ENCODE measurements at regions of chr14 and their contacts with region 1.

Region 1: DNA sequence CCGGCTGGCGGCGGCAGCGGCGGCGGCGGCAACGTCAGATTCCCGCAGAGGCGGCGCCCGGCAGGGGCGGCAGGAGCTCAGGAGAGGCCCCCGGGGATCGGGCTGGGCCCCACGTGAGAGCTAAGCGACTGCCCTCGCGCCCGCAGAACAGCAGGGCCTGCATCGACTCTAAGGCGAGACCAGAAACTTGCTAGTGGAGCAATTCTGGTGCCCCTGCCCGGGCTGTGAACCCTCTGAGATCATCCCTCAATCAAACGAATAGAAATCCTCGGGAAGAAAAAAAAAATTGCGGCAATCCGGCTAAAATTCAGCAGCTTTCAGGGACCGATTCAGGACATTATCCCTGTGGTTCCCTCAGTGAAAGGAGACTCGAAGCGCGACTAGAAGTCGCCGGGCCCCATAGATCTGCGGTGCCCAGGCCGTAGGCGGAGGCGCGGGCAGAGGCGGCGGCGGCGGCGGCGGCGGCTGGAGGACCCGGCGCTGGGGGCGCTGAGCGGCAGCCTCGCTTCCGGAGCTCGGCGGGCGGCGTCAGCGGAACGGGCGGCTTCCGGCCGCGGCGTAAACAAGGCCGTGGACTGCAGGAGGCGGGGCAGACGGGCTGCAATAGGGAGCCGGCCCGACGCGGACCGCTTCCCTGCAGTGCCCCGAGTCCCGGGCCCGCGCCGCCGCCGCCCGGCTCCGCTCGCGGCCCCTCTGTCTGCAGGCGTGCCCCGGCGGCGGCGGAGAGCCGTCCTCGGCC is at the start of gene KLHDC2:
- DNase-seq: peak; percentile 98
- H3K4me3 Mint-ChIP-seq: peak within 1 kb of the TSS; percentile 97
- H3K27ac Mint-ChIP-seq: peak within 1 kb of the TSS; percentile 100
- H3K4me1 Mint-ChIP-seq: peaks cover 31% of the 10 kb centered on the region
- H3K27me3 Mint-ChIP-seq: no peaks in the 10 kb centered on the region
- total RNA-seq, gene KLHDC2: 24.6 and 28.0 TPM in 2 replicates

Region 2: DNA sequence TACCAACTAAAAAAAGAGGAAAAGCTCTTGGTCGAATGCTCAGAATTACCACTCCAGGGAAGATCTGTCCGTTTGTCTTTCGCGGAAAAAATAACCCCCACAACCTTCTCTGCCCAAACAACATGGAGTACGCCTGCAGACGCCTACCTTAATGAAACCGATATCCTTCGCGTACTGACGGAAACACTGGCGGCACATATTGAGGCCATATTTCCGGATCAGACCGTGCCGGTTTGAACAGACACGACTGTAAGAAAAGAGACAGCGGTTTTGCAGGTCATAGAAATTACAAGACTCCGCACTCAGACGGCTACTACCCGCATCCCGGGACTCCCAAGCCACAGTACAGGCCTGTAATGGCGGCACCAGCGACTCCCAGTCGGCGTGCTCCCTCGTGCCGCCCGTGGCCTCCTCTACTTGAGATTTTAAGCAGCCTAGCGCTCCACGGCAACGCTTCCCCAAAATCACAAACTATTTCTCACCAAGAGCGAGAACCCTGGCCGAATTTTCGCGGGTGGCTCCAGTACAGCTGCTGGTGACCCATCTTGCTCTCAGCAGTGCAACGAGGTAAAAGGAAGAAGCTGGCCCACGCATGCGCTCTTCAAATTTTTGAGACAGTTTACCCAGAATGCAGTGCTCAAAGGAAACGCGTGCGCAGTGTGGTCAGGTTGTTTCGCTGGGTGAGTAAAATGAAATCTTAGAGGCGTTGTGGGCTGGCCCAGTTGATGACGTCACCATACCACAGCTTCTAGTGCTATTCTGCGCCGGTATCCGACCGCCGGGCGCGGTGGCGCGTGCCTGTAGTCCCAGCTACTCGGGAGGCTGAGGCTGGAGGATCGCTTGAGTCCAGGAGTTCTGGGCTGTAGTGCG is 181.7 kb before region 1 on chr14 and contains the start of gene RPS29:
- intact Hi-C with region 1: loop called (anchors 2 kb)
- DNase-seq: peak; percentile 99
- H3K4me3 Mint-ChIP-seq: peak within 1 kb of the TSS; percentile 89
- H3K27ac Mint-ChIP-seq: peak within 1 kb of the TSS; percentile 99
- H3K4me1 Mint-ChIP-seq: peaks cover 35% of the 10 kb centered on the region
- H3K27me3 Mint-ChIP-seq: peaks cover 3% of the 10 kb centered on the region
- total RNA-seq, gene RPS29: 1,960 and 2,033 TPM in 2 replicates

Region 3: DNA sequence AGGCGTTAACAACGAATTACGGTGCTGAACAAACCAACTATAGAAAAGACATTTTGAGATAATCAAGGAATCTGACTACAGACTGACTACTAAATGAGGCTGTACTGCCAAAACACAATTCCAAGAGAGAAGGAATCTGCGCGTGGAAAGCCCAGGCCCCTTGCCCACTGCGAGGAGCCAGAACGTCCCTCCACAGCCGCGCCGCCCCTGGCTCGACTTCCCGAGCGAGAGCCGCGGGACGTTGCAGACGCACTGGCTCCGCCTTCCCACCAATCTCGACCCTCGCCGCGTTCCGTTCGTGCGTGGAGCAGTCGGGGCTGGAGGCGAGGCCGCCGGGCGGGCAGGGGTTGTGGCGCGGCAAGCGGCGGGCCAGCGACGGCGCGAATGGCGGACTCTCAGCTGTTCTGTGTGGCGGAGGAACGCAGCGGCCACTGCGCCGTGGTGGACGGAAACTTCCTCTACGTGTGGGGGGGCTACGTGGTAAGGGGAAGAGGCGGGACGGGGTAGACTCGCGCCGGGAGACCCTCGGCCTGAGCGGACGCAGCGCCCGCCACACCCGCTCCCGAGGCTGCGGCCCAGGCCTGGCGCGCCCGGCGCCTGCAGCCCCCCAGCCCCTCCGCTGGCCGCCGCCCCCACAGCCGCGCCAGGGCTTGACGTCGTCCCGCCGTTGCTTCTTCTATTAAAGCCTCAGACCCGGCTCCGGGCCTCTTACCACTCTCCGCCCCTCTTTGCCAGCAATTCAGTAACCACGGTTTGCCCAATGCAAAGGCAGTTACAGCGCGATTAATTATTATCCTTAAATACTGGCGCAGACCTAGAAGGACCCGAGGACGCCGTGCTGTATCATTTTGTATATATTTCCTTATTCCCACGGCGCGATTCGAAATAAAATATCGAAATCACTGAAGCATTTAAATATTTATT is 74.7 kb before region 1 on chr14 and contains the start of gene KLHDC1:
- intact Hi-C with region 1: loop called (anchors 1 kb)
- DNase-seq: peak; percentile 95
- H3K4me3 Mint-ChIP-seq: peak within 1 kb of the TSS; percentile 79
- H3K27ac Mint-ChIP-seq: peak within 1 kb of the TSS; percentile 84
- H3K4me1 Mint-ChIP-seq: peaks cover 18% of the 10 kb centered on the region
- H3K27me3 Mint-ChIP-seq: no peaks in the 10 kb centered on the region
- total RNA-seq, gene KLHDC1: 0.95 and 0.96 TPM in 2 replicates

Region 4: GRCh38 chr14:50116181-50116956 is 348.6 kb after region 1 on chr14 and contains the start of gene VCPKMT:
- intact Hi-C with region 1: loop called (anchors 1 kb)
- DNase-seq: peak; percentile 99
- H3K4me3 Mint-ChIP-seq: peak within 1 kb of the TSS; percentile 97
- H3K27ac Mint-ChIP-seq: peak within 1 kb of the TSS; percentile 99
- H3K4me1 Mint-ChIP-seq: peaks cover 20% of the 10 kb centered on the region
- H3K27me3 Mint-ChIP-seq: no peaks in the 10 kb centered on the region
- total RNA-seq, gene VCPKMT: 13.9 and 14.3 TPM in 2 replicates

Region 5: GRCh38 chr14:50532502-50533240 is 764.9 kb after region 1 on chr14 and contains the start of gene MAP4K5:
- intact Hi-C with region 1: loop called (anchors 5 kb)
- DNase-seq: peak; percentile 96
- H3K4me3 Mint-ChIP-seq: peak within 1 kb of the TSS; percentile 89
- H3K27ac Mint-ChIP-seq: peak within 1 kb of the TSS; percentile 75
- H3K4me1 Mint-ChIP-seq: peaks cover 38% of the 10 kb centered on the region
- H3K27me3 Mint-ChIP-seq: peaks cover 17% of the 10 kb centered on the region
- total RNA-seq, gene MAP4K5: 24.3 and 24.6 TPM in 2 replicates

Measured in activated CD4-positive, alpha-beta T cell treated with anti-CD3 and anti-CD28 coated beads, Interleukin-2, amount 10 ng/mL, durations not matched to agents 24 days and 14 days (primary cell).